CD8-positive, alpha-beta T cell (primary cell): ENCODE measurements at regions of chr2 and their contacts with region 1.

Region 1: GRCh38 chr2:195559431-195559914 is 97.6 kb upstream of the SLC39A10 start:
- DNase-seq: peak; percentile 42 to 93 (median 73)
- ATAC-seq: peak; percentile 87
- H3K4me3 ChIP-seq: peak overlapping the region in 1 of 2 experiments; percentile 17
- H3K4me3 Mint-ChIP-seq: peak overlapping the region; percentile 42
- H3K27ac ChIP-seq: peak overlapping the region; percentile 63 to 75
- H3K27ac Mint-ChIP-seq: peak overlapping the region; percentile 89
- H3K4me1 ChIP-seq: peaks cover 66% of the 10 kb centered on the region
- H3K4me1 Mint-ChIP-seq: peaks cover 69% of the 10 kb centered on the region
- H3K27me3 ChIP-seq: no peaks in the 10 kb centered on the region
- H3K27me3 Mint-ChIP-seq: no peaks in the 10 kb centered on the region
- CTCF ChIP-seq: no peak

Region 2: DNA sequence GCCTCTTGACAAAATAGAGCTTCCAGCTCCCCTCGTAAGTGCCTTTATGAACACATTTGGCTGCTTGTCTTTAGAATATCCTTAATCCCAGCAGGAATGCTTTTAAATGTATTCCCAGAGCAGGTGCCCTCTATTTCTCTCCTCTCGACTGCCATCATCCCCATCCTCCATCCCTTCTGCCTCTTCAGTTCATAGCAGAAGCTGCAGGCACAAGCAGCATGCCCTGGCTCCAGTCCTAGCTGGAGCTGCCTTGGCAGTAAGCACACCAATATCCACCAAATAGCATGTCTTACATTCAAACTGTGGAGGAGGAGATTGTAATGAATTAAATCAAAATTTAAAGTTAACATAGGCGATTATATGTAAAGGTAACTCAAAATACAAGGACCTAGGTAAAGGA is 793.8 kb before region 1 on chr2:
- CTCF ChIA-PET with region 1: no interaction called
- POLR2A ChIA-PET with region 1: no interaction called
- intact Hi-C with region 1: no loop called
- DNase-seq: no peak
- ATAC-seq: no peak
- H3K4me3 ChIP-seq: no peak overlapping the region
- H3K4me3 Mint-ChIP-seq: no peak overlapping the region
- H3K27ac ChIP-seq: no peak overlapping the region
- H3K27ac Mint-ChIP-seq: no peak overlapping the region
- H3K4me1 ChIP-seq: no peaks in the 10 kb centered on the region
- H3K4me1 Mint-ChIP-seq: no peaks in the 10 kb centered on the region
- H3K27me3 ChIP-seq: no peaks in the 10 kb centered on the region
- H3K27me3 Mint-ChIP-seq: no peaks in the 10 kb centered on the region
- CTCF ChIP-seq: no peak

Region 3: DNA sequence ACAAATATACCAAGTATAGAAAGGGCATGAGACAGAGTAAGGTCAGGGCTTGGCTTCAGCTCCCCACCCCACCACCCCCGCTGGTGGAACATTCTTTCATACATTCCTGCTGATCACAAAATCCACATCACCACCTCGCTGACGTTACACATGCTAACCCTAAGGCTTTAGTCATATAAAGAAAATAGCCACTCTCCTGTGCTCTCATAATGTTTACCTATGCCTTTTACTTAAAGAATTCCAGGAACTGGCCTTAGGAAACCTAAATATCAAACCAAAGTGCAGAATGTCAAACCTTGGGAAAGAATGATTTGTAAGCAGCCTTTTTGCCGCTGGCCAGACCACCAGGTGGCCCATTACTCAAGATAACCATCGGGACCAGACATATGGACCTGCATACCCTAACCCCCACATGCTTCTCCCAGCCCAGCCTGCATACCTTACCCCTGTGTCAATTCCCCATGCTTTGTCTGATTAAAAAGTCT is 38.8 kb before region 1 on chr2:
- CTCF ChIA-PET with region 1: no interaction called
- POLR2A ChIA-PET with region 1: no interaction called
- intact Hi-C with region 1: loop called in 1 of 2 experiments (anchors 5 kb)
- DNase-seq: no peak
- ATAC-seq: no peak
- H3K4me3 ChIP-seq: no peak overlapping the region
- H3K4me3 Mint-ChIP-seq: no peak overlapping the region
- H3K27ac ChIP-seq: no peak overlapping the region
- H3K27ac Mint-ChIP-seq: no peak overlapping the region
- H3K4me1 ChIP-seq: no peaks in the 10 kb centered on the region
- H3K4me1 Mint-ChIP-seq: peaks cover 42% of the 10 kb centered on the region
- H3K27me3 ChIP-seq: no peaks in the 10 kb centered on the region
- H3K27me3 Mint-ChIP-seq: no peaks in the 10 kb centered on the region
- CTCF ChIP-seq: no peak

Region 4: DNA sequence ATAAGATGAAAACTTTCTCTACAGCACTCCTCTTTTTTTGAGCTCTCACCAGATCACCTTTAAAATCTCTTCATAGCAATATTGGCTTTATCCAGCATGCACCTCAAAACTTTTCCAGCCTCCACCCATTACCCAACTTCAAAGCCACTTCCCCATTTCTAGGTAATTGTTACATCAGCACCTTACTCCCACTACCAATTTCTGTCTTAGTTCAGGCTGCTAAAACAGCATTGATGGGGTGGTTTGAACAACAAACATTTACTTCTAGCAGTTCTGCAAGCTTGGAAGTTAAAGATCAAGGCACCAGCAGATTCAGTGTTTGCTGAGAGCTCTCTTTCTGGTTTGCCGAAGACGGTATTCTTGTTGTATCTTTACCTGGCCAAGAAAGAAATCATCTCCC is 16.4 kb before region 1 on chr2:
- CTCF ChIA-PET with region 1: interaction called, 39 read pairs
- POLR2A ChIA-PET with region 1: interaction called, 60 read pairs
- intact Hi-C with region 1: no loop called
- DNase-seq: no peak
- ATAC-seq: no peak
- H3K4me3 ChIP-seq: no peak overlapping the region
- H3K4me3 Mint-ChIP-seq: no peak overlapping the region
- H3K27ac ChIP-seq: no peak overlapping the region
- H3K27ac Mint-ChIP-seq: peak overlapping the region; percentile 77
- H3K4me1 ChIP-seq: peaks cover 24% of the 10 kb centered on the region
- H3K4me1 Mint-ChIP-seq: peaks cover 44% of the 10 kb centered on the region
- H3K27me3 ChIP-seq: no peaks in the 10 kb centered on the region
- H3K27me3 Mint-ChIP-seq: no peaks in the 10 kb centered on the region
- CTCF ChIP-seq: no peak

Region 5: GRCh38 chr2:195575879-195576401 is 16.5 kb after region 1 on chr2:
- CTCF ChIA-PET with region 1: interaction called, 11 read pairs
- POLR2A ChIA-PET with region 1: interaction called, 32 read pairs
- intact Hi-C with region 1: loop called in 1 of 2 experiments (anchors 2 kb)
- DNase-seq: peak in 2 of 9 experiments; percentile 43 to 64
- ATAC-seq: peak; percentile 57
- H3K4me3 ChIP-seq: no peak overlapping the region
- H3K4me3 Mint-ChIP-seq: peak overlapping the region; percentile 66
- H3K27ac ChIP-seq: no peak overlapping the region
- H3K27ac Mint-ChIP-seq: peak overlapping the region; percentile 84
- H3K4me1 ChIP-seq: peaks cover 51% of the 10 kb centered on the region
- H3K4me1 Mint-ChIP-seq: peaks cover 76% of the 10 kb centered on the region
- H3K27me3 ChIP-seq: no peaks in the 10 kb centered on the region
- H3K27me3 Mint-ChIP-seq: no peaks in the 10 kb centered on the region
- CTCF ChIP-seq: peak; percentile 6